ENCODE measurements at regions of chr1 and their contacts with region 1.

Region 1: DNA sequence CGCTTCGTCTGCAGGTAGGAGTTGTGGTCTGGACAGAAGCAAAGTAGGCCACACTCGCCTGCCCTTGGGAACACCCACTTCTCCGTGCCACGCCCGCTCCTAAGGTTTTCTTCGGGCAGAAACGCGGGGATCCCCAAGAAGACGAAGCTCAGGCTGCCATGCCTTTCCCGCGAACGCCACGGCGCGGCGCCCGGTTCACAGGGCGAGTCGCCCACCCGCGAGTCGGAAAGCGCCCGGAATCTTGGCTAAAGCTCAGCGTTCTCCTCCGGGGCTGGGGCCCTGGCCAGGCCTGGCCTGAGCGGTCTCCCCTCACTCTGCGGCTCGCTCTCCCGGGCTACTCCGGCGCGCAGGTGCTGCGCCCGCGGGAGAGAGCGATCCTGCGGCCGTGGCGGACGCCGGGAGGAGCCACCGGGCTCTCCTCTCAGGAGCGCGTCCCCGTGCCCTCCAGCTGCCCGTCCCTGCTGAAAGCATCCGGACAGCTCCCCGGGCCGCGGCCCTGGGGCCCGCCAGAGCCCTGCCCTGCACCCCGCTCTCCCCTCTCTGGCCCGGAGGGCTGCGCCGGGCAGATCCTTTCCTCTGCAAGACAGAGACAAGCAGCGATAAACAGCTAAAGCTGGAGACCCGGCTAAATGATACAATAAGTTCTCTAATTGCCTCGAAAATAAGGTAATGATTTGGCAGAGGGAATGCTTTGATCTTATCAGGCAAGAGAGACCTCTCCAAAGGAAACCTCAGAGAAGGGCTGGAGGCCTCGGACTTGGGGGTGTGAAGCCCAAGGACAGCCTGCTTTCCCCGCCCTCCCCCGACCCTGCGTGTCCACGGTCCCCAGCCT is 6.7 kb upstream of the WNT2B start:
- DNase-seq: peak; percentile 67
- H3K4me3 Mint-ChIP-seq: peak overlapping the region; percentile 53
- H3K27ac Mint-ChIP-seq: no peak overlapping the region
- H3K4me1 Mint-ChIP-seq: no peaks in the 10 kb centered on the region
- H3K27me3 Mint-ChIP-seq: peaks cover 26% of the 10 kb centered on the region
- CTCF ChIP-seq: peak; percentile 34

Region 2: DNA sequence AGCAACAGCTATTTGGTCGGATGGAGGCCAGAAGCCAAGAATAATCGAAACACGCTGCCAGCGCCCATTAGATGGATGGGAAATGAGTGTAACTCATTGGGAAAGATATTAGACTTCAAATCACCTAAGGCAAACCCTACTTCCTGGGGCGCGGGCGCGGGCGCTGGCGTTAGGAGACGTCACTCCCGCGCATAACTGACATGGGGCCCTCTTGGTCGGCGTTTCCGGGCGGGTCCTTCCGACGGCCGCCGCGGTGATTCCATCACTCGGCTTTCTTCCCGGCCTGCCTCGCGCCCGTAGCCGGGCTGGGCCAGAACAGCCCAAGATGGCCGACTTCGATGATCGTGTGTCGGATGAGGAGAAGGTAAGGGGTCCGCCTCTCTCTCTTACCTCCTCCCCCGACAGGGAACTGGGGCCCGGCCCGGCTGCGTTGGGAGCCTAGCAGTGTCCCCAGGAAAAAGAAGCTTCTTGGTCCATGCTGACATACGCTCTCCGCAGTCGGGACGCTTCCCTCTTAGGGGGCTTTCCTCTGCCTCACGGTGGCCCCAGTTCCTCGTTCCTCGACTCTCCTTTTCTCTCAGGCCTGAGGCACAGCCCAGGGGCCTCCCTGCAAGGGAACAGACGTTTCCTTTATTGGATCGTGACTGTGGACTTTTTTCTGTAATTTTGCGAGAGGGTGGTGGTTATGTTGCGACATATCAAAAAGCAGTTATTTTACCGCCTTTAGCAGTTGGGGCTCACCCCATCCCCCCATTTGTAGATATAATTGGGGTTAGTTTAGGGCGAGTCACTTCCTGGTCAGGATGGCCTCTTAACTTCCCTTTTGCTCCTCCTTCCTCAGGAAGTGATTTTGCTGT is 117.7 kb after region 1 on chr1 and contains the start of gene CAPZA1:
- CTCF ChIA-PET with region 1: no interaction called
- intact Hi-C with region 1: loop called (anchors 10 kb)
- DNase-seq: peak; percentile 84
- H3K4me3 Mint-ChIP-seq: peak within 1 kb of the TSS; percentile 93
- H3K27ac Mint-ChIP-seq: peak within 1 kb of the TSS; percentile 97
- H3K4me1 Mint-ChIP-seq: peaks cover 1% of the 10 kb centered on the region
- H3K27me3 Mint-ChIP-seq: no peaks in the 10 kb centered on the region
- CTCF ChIP-seq: no peak
- total RNA-seq, gene CAPZA1: 103 and 117 TPM in 2 replicates

Region 3: DNA sequence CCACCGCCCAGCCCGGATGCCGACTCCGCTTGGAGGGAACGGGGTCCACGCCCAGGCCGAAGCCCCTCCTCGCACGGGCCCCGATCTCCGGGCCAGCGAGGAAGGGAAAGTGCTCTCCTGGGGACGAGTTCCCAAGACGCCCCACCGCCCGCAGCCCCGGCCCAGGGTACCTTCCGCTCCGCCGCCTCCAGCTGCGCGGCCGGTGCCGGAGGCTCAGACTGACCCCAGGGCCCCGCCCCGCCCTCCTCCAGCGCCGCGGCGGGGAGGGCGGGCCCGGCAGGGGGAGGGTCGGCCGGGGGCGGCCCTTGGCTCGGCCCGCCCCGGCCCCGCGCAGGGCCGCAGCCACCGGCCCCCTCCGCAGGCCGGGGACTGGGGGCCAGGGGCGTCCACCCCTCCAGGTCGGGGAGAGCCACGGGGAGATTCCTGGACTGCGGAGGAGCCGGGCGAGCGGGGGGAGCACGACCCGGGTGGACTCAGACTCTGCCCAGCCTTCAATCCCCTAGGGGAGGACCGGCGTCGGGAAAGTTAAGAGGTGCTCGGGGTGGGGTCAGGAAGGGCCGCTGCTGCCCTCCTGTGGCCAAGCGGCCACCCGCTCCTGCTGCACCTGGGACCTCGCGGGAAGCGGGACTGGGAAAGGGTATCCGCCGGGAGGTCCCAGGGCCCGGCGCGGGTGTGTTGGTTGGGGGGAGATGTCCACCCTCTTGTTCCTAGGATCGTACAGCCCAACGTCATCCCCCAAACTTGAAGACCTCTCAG is 205.1 kb after region 1 on chr1 and contains the start of gene RHOC:
- CTCF ChIA-PET with region 1: no interaction called
- intact Hi-C with region 1: no loop called
- DNase-seq: peak; percentile 86
- H3K4me3 Mint-ChIP-seq: peak within 1 kb of the TSS; percentile 97
- H3K27ac Mint-ChIP-seq: peak within 1 kb of the TSS; percentile 96
- H3K4me1 Mint-ChIP-seq: peaks cover 34% of the 10 kb centered on the region
- H3K27me3 Mint-ChIP-seq: no peaks in the 10 kb centered on the region
- CTCF ChIP-seq: peak; percentile 78
- total RNA-seq, gene RHOC: 176 and 197 TPM in 2 replicates

Measured in Calu3 (cell line).